ENCODE measurements at regions of chr1 and their contacts with region 1.

Region 1: DNA sequence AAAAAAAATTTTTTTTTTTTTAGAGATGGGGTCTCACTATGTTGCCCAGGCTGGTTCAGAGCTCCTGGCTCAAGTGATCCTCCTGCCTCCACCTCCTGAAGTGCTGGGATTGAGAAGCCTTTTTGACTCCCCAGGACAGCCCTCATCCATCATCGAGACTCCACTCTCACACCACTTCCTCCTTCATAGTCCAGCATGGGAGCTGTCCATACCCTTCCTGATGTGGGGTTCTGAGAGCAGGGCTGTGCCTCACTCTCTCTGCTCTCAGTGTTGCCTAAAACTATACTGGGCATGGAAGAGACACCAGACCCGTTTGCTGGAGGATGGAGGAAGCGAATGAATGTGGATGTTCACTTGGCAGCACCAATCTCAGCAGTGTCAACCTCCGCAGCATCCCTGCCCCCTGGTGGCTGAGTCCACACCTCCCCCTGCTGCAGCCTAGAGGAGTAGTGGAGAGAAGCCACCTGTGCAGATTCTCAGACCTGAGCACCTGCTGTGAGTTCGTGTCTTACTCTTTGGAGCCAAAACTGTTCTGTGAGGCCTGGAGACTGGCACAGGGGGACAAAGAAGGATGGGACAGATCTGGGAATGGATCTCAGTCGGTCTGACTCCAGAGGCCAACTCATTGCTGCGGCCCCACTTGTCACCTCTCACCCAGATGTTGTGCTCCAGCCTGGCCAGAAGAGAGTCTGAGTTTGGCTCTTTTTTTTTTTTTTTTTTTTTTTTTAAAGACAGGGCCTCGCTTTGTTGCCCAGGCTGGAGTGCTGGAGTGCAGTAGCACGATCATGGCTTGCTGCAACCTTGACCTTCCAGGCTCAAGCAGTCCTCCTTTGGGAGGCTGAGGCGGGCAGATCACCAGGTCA is 17.7 kb downstream of the TINAGL1 start:
- DNase-seq: peak; percentile 83 to 93
- ATAC-seq: peak; percentile 75

Region 2: GRCh38 chr1:31467005-31467700 is 126.8 kb before region 1 on chr1:
- intact Hi-C with region 1: no loop called
- DNase-seq: no peak
- ATAC-seq: no peak

Region 3: DNA sequence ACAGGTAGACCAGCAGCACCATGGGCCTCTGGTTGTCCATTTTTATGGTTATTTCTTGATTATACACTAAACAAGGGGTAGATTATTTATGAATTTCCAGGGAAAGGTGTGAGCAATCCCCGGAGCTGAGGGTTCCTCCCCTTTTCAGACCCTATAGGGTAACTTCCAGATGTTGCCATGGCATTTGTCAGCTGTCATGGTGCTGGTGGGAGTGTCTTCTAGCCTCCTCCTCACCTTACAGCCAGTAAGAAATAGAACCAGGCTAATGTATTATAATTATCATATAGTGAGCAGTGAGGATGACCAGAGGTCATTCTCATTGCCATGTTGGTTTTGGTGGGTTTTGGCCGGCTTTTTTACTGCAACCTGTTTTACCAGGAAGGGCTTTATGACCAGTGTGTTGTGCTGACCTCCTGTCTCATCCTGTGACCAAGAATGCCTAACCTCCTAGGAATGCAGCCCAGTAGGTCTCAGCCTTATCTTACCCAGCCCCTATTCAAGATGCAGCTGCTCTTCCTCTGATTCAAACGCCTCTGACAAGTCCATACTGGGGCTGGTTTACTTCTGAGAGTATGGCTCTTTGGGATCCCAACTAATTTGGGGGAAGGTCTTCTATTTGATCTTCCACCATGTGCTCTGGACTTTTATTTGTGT is 31.2 kb before region 1 on chr1:
- intact Hi-C with region 1: loop called in 1 of 2 experiments (anchors 2 kb)
- DNase-seq: no peak
- ATAC-seq: peak; percentile 62

Region 4: DNA sequence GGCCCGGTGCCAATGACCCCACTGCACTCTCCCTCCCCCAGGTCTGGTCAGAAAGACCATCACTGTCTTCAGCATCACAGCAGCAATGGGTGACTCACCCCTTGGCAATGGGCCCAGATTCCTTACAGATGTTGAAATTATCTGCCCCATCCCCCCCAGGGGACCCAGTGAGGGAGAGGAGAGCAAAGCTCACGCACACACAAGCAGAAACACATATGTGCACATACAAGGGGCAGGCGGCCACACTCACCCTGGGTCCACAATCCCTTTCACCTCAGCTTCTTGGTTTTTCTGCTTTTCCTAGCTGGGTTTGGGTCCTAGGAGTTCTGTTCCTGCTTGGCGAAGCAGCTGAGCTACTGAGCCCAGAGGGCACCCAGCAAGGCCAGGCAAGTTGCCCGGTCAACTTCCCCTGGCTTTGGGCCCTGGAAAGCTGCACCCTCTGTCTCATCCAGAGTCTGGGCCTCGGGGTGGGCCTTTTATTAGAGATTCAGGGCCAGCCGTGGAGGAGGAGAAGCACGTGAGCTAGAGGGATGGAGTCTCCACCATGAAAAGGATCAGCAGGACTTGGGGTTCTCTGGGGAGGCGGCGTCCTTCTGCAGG is 107.2 kb after region 1 on chr1:
- intact Hi-C with region 1: no loop called
- DNase-seq: peak; percentile 75 to 84
- ATAC-seq: no peak

Measured in left colon (tissue), 2 donors.